Thyroid gland (tissue), 4 donors: ENCODE measurements at regions of chr17 and their contacts with region 1.

Region 1: DNA sequence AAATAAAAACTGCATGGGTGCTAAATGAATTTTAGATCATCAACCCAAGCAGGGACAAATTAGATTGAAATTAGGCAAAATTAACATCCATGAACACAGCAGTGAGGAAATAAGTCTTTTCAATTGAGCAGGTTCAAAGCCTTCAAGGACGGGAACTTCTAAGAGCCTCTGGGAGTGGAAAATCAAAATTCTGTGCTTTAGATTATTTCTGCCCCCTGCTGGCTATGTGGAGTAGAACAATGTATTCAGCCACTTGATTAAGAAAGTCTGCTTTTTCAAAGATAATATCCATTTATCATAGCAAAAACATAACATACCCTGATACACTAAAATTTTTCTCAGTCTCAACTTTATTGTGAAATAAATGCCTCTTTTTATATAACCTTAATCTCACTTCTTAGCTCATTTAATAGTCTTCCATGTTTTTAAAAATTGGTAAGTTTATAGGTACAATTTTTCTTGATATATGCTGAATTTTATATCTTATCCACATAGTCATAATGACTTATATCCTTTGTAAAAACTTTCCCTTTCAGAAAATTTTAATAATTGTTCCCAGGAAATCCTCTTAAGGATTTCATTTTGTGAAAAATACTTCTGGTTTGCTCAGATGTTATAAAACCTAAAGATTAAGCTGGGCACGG is 28.1 kb upstream of the NOL11 start:
- DNase-seq: peak; percentile 45 to 48
- H3K4me3 ChIP-seq: no peak overlapping the region
- H3K27ac ChIP-seq: no peak overlapping the region
- H3K4me1 ChIP-seq: no peaks in the 10 kb centered on the region
- H3K27me3 ChIP-seq: no peaks in the 10 kb centered on the region
- CTCF ChIP-seq: peak; percentile 55 to 89 (median 80)
- POLR2A ChIP-seq: no peak

Region 2: DNA sequence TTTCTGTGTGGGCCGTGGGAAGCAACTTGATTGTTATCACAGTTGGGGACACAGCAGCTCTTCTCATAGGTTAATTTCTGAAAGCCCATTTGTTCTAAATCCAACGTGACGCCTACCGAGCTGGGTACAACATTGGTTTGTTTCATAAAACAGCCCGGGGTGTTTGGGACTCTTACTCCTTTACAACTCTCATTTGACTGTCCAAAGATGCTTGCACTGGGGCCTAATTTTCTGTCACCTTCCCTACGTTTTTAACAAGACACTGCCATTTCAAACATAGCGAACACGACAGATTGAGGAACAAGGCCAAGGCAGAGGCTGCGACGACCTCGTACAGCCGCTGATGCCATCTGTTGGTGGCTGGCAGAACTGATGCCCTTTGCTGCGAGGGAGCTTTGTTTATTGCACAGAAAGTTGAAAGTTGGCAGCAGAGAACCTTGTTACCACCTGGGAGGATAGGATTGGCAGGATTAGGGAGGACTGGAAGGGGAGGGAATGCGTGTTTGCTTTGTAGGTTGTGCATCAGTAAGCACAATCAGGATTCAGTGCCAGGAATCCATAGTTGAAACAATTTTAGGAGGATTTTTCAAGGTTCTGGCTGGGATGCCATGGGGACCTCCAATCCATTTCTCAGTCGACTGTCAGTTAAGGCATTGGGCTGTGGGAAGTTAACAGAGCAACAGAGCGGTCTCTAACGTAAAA is 214.3 kb before region 1 on chr17:
- intact Hi-C with region 1: loop called (anchors 10 kb)
- DNase-seq: peak; percentile 87 to 89
- H3K4me3 ChIP-seq: no peak overlapping the region
- H3K27ac ChIP-seq: peak overlapping the region; percentile 5 to 75 (median 56)
- H3K4me1 ChIP-seq: peaks cover 4 to 37% of the 10 kb centered on the region in 2 donors
- H3K27me3 ChIP-seq: no peaks in the 10 kb centered on the region
- CTCF ChIP-seq: peak; percentile 72 to 97 (median 93)
- POLR2A ChIP-seq: peak in 1 of 2 donors; percentile 10

Region 3: DNA sequence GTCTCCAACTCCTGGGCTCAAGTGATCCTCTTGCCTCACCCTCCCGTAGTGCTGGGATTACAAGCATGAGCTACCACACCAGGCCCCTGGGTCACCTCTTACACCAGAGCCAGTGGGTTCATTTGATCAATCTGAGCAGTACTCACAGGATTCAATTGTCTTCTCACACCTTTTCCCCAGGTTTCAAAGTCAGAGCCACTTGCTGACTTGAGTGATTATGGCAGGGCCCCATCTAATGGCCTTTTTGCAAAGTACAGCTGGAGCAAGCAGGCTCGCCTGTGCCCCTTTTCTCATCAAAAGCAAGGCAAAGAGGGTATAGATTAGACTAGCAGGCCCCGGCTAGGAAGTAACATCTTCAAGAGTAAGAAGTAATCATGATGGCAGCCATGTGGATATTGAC is 86.7 kb before region 1 on chr17:
- intact Hi-C with region 1: no loop called
- DNase-seq: peak; percentile 27 to 45
- H3K4me3 ChIP-seq: no peak overlapping the region
- H3K27ac ChIP-seq: no peak overlapping the region
- H3K4me1 ChIP-seq: peaks cover 14 to 32% of the 10 kb centered on the region in 2 donors
- H3K27me3 ChIP-seq: no peaks in the 10 kb centered on the region
- CTCF ChIP-seq: peak in 4 of 6 experiments; percentile 48 to 66 (median 55)
- POLR2A ChIP-seq: no peak

Region 4: GRCh38 chr17:67629971-67630320 is 59.7 kb before region 1 on chr17:
- intact Hi-C with region 1: loop called (anchors 10 kb)
- DNase-seq: no peak
- H3K4me3 ChIP-seq: no peak overlapping the region
- H3K27ac ChIP-seq: peak overlapping the region; percentile 78 to 89 (median 84)
- H3K4me1 ChIP-seq: peaks cover 11 to 37% of the 10 kb centered on the region in 2 donors
- H3K27me3 ChIP-seq: no peaks in the 10 kb centered on the region
- CTCF ChIP-seq: peak in 4 of 6 experiments; percentile 33 to 46 (median 38)
- POLR2A ChIP-seq: no peak